ENCODE measurements at regions of chr3 and their contacts with region 1.

Region 1: DNA sequence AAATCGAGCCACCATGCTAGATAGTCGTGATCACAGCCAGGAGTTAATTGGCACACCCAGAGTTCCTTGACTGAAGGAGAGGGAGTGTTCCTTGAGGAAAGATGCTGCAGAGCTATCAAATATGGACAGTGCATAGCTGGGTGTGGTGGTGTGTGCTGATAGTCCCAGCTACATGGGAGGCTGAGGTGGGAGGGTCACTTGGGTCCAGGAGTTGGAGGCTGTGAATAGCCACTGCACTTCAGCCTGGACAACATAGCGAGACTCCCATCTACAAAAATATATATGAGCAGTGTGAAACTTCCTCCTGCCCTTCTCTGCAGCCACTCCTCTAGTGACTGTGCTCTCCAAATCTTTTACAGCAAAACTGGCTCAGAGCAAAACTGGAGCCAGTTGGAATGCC is 10.0 kb upstream of the USP13 start:
- DNase-seq: no peak
- ATAC-seq: no peak
- H3K4me3 ChIP-seq: no peak overlapping the region
- H3K27ac ChIP-seq: no peak overlapping the region
- H3K4me1 ChIP-seq: no peaks in the 10 kb centered on the region
- H3K27me3 ChIP-seq: no peaks in the 10 kb centered on the region
- CTCF ChIP-seq: no peak

Region 2: GRCh38 chr3:179732661-179733348 is 89.9 kb after region 1 on chr3:
- intact Hi-C with region 1: loop called in 1 of 2 experiments (anchors 10 kb)
- DNase-seq: peak in 1 of 4 donors; percentile 40
- ATAC-seq: peak; percentile 37
- H3K4me3 ChIP-seq: no peak overlapping the region
- H3K27ac ChIP-seq: peak overlapping the region; percentile 35 to 49
- H3K4me1 ChIP-seq: peaks cover 0 to 5% of the 10 kb centered on the region in 2 donors
- H3K27me3 ChIP-seq: no peaks in the 10 kb centered on the region
- CTCF ChIP-seq: no peak

Measured in left lung (tissue), 14 donors.